ENCODE measurements at regions of chr6 and their contacts with region 1.

Region 1: DNA sequence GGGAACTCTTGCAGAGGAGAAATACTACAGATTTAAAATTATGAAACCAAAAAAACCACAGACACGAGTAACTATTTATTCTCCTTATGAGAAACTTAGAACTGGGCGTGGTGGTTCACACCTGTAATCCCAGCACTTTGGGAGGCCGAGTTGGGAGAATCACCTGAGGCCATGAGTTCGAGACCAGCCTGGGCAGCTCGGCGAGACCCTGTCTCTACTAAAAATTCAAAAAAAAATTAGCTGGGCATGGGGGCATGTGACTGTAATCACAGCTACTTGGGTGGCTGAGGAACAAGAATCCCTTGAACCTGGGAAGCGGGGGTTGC is 36.8 kb downstream of the SSR1 start:
- DNase-seq: no peak
- H3K4me3 ChIP-seq: no peak overlapping the region
- H3K27ac ChIP-seq: no peak overlapping the region
- H3K4me1 ChIP-seq: no peaks in the 10 kb centered on the region
- H3K27me3 ChIP-seq: no peaks in the 10 kb centered on the region
- CTCF ChIP-seq: no peak
- EP300 ChIP-seq: no peak
- POLR2A ChIP-seq: no peak
- RAD21 ChIP-seq: no peak

Region 2: DNA sequence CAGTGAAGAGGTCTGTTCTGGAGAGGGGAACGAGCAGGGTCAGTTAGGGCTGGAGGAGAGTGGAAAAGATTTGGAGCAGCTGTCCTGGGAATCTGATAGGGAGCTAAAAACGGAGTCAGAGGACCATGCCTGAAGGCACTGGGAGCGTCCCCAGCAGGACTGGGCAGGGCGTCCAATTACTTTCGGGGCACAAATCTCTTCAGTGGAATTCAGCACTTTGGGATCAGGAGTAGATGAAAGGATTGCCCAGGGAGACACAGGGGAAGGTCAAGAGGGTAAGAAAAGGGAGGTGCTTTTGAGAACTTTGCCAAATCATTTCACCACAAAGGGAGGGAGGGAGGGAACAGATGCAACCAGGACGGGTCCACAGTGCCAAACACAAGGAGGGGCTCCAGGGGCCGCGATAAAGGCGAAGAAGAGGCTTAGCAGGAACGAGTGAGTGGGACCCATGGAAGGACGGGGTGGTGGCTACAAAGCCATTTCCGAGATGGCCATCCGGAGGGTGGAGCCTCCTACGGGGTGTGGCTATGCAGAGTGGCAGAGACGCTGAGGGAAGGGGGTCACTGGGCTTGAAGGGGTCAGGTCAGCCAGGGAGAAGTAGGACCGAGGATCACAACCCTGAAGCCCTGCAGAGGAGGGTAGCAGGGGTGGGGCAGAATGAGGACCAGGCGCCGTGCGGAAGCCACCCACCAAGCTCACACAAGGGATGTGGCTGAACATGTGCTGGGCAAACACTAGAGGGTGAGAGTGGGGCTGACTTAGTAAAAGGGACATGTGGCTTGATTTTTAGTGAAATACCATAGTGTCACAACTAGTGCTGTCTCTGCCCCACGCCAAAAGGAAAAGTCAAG is 348.4 kb before region 1 on chr6:
- CTCF ChIA-PET with region 1: no interaction called
- POLR2A ChIA-PET with region 1: no interaction called
- DNase-seq: peak in 1 of 2 experiments; percentile 56
- H3K4me3 ChIP-seq: no peak overlapping the region
- H3K27ac ChIP-seq: no peak overlapping the region
- H3K4me1 ChIP-seq: no peaks in the 10 kb centered on the region
- H3K27me3 ChIP-seq: no peaks in the 10 kb centered on the region
- CTCF ChIP-seq: peak in 2 of 3 experiments; percentile 18 to 21; a peak in 2 of 4 replicates
- EP300 ChIP-seq: no peak
- POLR2A ChIP-seq: no peak
- RAD21 ChIP-seq: peak in 1 of 2 experiments; percentile 14; a peak in 2 of 4 replicates

Region 3: DNA sequence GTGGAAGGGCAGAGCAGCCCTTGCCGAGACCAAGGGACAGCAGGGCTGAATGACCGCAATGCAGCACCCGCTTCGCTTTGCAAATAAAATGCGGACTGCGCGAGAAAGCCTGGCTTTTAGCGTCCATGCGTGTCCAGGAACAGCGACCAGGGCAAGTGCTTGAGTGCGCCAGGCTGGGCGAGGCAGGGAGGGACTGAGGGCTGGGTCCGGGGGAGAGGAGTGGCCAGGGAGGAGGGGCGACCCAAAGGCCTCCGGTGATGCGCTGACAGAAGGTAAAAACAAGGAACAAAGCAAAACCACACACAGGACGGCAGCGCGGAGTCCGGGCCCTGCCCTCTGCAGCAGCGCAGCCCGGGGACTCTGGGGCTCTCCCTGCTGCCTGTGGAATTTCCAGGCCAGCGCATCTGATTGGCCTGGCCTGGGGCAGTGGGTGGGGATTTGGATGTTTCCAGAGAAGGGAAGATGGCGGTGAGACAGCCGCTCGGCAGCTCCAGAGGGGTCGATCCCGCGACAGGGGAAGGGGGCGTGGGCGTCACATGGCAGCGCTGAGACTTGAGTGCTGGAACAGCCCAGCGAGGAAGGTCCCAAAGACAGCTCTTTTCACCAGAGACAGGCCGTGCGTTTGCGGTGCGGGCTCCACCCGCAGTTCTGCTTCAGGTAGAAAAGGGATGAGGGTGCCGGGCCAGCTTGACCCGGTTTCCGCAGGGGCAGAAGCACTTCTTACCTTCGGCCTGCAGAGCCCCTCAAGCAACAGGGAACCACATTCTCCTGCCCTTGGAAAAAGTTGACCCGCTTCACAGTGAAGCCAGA is 14.9 kb before region 1 on chr6:
- CTCF ChIA-PET with region 1: interaction called, 36 read pairs
- POLR2A ChIA-PET with region 1: interaction called, 5 read pairs
- DNase-seq: peak; percentile 82 to 90
- H3K4me3 ChIP-seq: peak overlapping the region; percentile 50 to 70 (median 60)
- H3K27ac ChIP-seq: peak overlapping the region; percentile 62; the same call in 1 of the 2 replicates
- H3K4me1 ChIP-seq: peaks cover 0 to 16% (median 11%) of the 10 kb centered on the region in 4 experiments; a peak in 6 of 7 replicates
- H3K27me3 ChIP-seq: no peaks in the 10 kb centered on the region
- CTCF ChIP-seq: no peak
- EP300 ChIP-seq: no peak
- POLR2A ChIP-seq: peak in 1 of 2 experiments; percentile 83; a peak in 2 of 3 replicates
- RAD21 ChIP-seq: peak in 1 of 2 experiments; percentile 20; a peak in 2 of 4 replicates

Region 4: GRCh38 chr6:7615611-7616383 is 339.6 kb after region 1 on chr6:
- CTCF ChIA-PET with region 1: interaction called, 24 read pairs
- POLR2A ChIA-PET with region 1: no interaction called
- DNase-seq: peak in 1 of 2 experiments; percentile 58
- H3K4me3 ChIP-seq: no peak overlapping the region
- H3K27ac ChIP-seq: no peak overlapping the region
- H3K4me1 ChIP-seq: no peaks in the 10 kb centered on the region
- H3K27me3 ChIP-seq: no peaks in the 10 kb centered on the region
- CTCF ChIP-seq: peak; percentile 58 to 73 (median 72)
- EP300 ChIP-seq: no peak
- POLR2A ChIP-seq: no peak
- RAD21 ChIP-seq: peak; percentile 85 to 88